ENCODE measurements at regions of chr1 and their contacts with region 1.

Region 1: GRCh38 chr1:34597877-34598514 is 156.9 kb upstream of the GJB5 start:
- DNase-seq: peak in 1 of 2 experiments; percentile 54
- H3K4me3 ChIP-seq: no peak overlapping the region
- H3K27ac ChIP-seq: no peak overlapping the region
- H3K4me1 ChIP-seq: no peaks in the 10 kb centered on the region
- H3K27me3 ChIP-seq: peaks cover 9% of the 10 kb centered on the region; the same call in 1 of the 2 replicates
- CTCF ChIP-seq: peak; percentile 80

Region 2: DNA sequence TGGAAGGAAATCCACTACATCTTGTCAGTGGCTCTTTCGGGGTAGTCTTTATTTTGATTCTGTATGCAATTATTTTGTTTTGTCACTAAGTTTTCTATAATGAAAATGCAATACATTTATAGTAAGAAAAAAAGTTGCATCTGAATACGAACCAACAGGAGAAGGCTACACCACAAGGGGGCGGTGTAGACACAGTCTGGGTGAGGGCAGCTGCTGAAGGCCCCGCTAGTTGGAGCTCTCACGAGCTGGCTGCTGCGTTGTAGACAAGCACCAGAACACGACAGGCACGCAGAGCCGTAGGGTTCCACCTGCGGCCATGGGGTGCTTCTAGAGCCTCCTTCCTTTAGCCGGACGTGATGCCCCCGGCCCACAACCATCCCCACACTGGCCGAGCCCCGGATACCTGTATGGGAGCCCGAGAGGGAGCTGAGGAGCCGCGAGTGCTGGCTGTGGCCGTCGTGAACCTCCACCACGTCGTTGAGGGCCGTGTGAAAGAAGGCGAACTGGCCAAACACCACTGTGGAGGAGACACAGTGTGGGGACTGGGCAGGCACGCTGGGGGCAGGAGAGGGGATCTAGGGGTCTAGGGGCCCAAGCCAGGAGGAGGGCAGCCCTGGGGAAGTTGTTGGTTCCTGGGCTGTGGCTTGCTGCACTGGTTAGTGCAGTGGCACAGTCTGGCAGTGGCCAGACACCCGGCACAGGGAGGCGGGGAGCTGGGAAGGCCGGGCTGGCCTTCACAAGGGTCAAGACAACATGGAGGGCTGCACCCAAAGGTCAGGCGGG is 964.8 kb before region 1 on chr1:
- CTCF ChIA-PET with region 1: no interaction called
- POLR2A ChIA-PET with region 1: no interaction called
- intact Hi-C with region 1: loop called (anchors 5 kb)
- DNase-seq: peak; percentile 42 to 74
- H3K4me3 ChIP-seq: no peak overlapping the region
- H3K27ac ChIP-seq: no peak overlapping the region
- H3K4me1 ChIP-seq: no peaks in the 10 kb centered on the region
- H3K27me3 ChIP-seq: peaks cover 65% of the 10 kb centered on the region
- CTCF ChIP-seq: peak; percentile 78

Region 3: GRCh38 chr1:34113887-34114286 is 484.1 kb before region 1 on chr1:
- CTCF ChIA-PET with region 1: no interaction called
- POLR2A ChIA-PET with region 1: no interaction called
- intact Hi-C with region 1: loop called (anchors 5 kb)
- DNase-seq: no peak
- H3K4me3 ChIP-seq: no peak overlapping the region
- H3K27ac ChIP-seq: no peak overlapping the region
- H3K4me1 ChIP-seq: no peaks in the 10 kb centered on the region
- H3K27me3 ChIP-seq: no peaks in the 10 kb centered on the region
- CTCF ChIP-seq: peak; percentile 58

Region 4: GRCh38 chr1:34663031-34663430 is 65.0 kb after region 1 on chr1:
- CTCF ChIA-PET with region 1: no interaction called
- POLR2A ChIA-PET with region 1: no interaction called
- intact Hi-C with region 1: no loop called
- DNase-seq: no peak
- H3K4me3 ChIP-seq: no peak overlapping the region
- H3K27ac ChIP-seq: no peak overlapping the region
- H3K4me1 ChIP-seq: no peaks in the 10 kb centered on the region
- H3K27me3 ChIP-seq: peaks cover 29% of the 10 kb centered on the region
- CTCF ChIP-seq: no peak

Measured in PC-9 (cell line).